ENCODE measurements at regions of chr10 and their contacts with region 1.

Region 1: GRCh38 chr10:42952349-42952748 is 124.5 kb upstream of the RET start:
- DNase-seq: no peak
- H3K4me3 ChIP-seq: no peak overlapping the region
- CTCF ChIP-seq: no peak

Region 2: GRCh38 chr10:43000651-43001423 is 48.5 kb after region 1 on chr10:
- in situ Hi-C with region 1: loop called (anchors 10 kb)
- DNase-seq: no peak
- H3K4me3 ChIP-seq: no peak overlapping the region
- CTCF ChIP-seq: no peak

Region 3: GRCh38 chr10:43039624-43040481 is 87.5 kb after region 1 on chr10:
- in situ Hi-C with region 1: no loop called
- DNase-seq: no peak
- H3K4me3 ChIP-seq: no peak overlapping the region
- CTCF ChIP-seq: no peak